Gastrocnemius medialis (tissue), 4 donors: ENCODE measurements at regions of chr12 and their contacts with region 1.

Region 1: DNA sequence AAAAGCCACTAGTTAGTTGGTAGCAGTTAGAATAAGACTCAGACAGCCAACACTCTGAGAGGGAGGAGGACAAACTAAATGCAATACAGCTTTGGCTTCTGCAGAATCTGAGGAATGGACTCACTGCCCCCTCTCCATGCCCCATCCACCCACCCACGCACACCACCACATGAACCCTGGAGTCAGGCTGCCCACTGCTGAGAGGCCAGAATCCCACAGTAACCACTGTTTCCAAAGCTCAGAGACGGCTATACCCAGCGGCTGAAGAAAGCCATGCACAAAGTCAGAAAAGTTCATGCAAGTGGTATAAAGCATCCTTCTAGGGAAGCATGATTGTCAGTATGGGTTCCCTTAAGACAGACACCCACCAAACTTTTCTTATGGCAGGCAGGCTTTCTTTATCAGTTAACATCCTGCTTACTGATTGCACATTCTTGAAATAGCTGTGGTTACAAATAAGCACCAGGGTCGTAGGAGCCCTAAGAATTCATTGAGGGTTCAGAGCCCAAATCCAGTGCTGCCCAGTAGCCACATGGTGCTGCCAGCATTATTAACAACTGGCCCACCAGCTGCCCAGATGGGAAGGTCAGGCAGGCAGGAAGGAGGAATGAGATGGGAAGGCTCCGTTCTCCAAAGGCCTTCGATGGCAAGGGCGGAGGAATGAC is 61.5 kb downstream of the NT5DC3 start:
- DNase-seq: no peak
- ATAC-seq: no peak
- H3K4me3 ChIP-seq: no peak overlapping the region
- H3K27ac ChIP-seq: peak overlapping the region in 1 of 4 donors; percentile 91
- H3K4me1 ChIP-seq: peaks cover 39 to 45% of the 10 kb centered on the region in 2 donors
- H3K27me3 ChIP-seq: no peaks in the 10 kb centered on the region
- CTCF ChIP-seq: no peak
- POLR2A ChIP-seq: no peak

Region 2: DNA sequence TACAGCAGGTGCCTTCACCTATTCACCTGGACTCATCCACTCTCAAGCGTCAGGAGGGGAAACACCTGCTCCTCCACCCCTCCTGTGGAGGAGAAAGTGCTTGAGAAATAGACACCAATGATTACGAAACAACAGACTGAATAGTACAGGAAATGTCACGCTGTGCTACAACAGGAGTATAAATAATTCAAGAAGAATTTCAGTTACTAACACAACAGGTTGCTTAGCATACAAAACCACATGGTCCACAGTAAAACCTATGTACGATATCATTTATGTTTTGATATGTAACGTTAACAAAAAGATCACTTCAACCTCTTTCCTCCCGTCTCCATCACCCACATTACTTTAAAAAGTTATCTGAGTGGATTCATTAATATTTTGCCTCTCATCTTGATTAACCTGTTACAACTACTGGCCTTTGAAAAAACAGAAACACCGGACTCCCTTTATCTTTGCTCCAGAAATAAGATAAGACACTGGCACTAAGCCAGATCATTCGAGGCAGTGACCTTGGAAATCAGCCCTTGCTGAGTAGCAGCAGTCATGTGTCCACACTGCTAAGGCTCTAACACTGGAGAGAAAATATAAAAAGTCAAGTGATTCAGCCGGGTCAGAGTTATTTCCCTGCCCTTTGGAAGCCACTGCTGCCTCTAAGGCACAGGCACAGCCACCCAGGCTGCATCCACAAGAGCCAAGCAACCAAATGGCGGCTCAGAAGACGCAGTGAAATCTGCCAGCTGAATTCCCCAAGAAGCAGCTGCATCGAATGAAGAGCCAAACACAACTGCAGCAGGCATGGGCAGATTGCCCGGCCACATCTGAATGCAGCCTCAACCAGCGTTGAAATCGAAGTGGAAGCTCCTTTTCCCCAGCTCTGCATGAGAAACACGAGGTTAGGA is 20.6 kb after region 1 on chr12:
- in situ Hi-C with region 1: no loop called
- intact Hi-C with region 1: loop called (anchors 1 kb)
- DNase-seq: peak; percentile 70 to 77
- ATAC-seq: peak; percentile 87 to 88
- H3K4me3 ChIP-seq: peak overlapping the region; percentile 2 to 35 (median 26)
- H3K27ac ChIP-seq: peak overlapping the region; percentile 81 to 94 (median 90)
- H3K4me1 ChIP-seq: peaks cover 29 to 34% of the 10 kb centered on the region in 2 donors
- H3K27me3 ChIP-seq: no peaks in the 10 kb centered on the region
- CTCF ChIP-seq: no peak
- POLR2A ChIP-seq: no peak

Region 3: GRCh38 chr12:103840876-103841689 is 61.5 kb after region 1 on chr12 and contains the start of gene NT5DC3:
- in situ Hi-C with region 1: no loop called
- intact Hi-C with region 1: loop called (anchors 2 kb)
- DNase-seq: peak; percentile 75 to 78
- ATAC-seq: peak; percentile 83 to 87
- H3K4me3 ChIP-seq: peak within 1 kb of the TSS; percentile 63 to 90 (median 79)
- H3K27ac ChIP-seq: peak within 1 kb of the TSS; percentile 80 to 90 (median 82)
- H3K4me1 ChIP-seq: peaks cover 14 to 20% of the 10 kb centered on the region in 2 donors
- H3K27me3 ChIP-seq: no peaks in the 10 kb centered on the region
- CTCF ChIP-seq: peak in 1 of 5 experiments; percentile 12
- POLR2A ChIP-seq: peak; percentile 93 to 97
- total RNA-seq, gene NT5DC3: 8.8 to 18.7 (median 13.9) TPM

Region 4: DNA sequence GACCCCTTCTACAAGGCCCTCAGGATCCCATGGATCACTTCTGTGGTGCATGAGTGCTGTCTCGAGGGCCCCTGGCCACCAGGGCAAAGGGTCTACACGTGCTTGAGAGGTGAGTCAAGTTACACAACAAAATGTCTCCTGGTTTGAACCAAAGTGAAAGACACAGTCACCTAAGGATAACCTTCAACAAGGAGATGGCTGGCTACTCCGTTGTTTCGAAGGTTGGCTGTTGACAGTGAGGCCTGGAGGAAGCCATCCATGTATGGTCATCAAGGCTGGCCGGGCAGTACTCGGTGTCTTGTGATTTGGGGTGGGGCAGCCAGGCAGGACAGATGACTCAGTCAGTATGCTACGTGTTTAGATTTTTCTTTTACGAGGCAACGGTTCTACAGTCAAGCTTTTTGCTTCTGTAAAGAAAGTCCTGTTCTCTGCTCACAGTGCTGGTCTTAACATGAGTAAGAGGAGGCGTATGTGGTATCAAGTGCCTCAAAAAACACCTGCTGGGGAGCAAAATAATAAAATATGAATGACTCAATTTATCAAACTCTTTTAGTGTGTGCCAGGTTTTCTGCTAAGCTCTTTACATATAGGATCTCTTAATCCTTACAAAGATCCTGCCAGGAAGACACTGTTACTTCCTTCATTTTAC is 79.5 kb after region 1 on chr12:
- in situ Hi-C with region 1: loop called in 2 of 4 experiments (anchors 10 kb)
- intact Hi-C with region 1: loop called (anchors 1 kb)
- DNase-seq: peak; percentile 85 to 90
- ATAC-seq: peak; percentile 97 to 98
- H3K4me3 ChIP-seq: no peak overlapping the region
- H3K27ac ChIP-seq: peak overlapping the region; percentile 78 to 93 (median 79)
- H3K4me1 ChIP-seq: peaks cover 6 to 13% of the 10 kb centered on the region in 2 donors
- H3K27me3 ChIP-seq: no peaks in the 10 kb centered on the region
- CTCF ChIP-seq: no peak
- POLR2A ChIP-seq: peak in 1 of 2 donors; percentile 35

Region 5: GRCh38 chr12:105226219-105226618 is 1446.7 kb after region 1 on chr12:
- in situ Hi-C with region 1: no loop called
- intact Hi-C with region 1: loop called (anchors 10 kb)
- DNase-seq: peak; percentile 72 to 74
- ATAC-seq: peak; percentile 93 to 96
- H3K4me3 ChIP-seq: no peak overlapping the region
- H3K27ac ChIP-seq: peak overlapping the region; percentile 42 to 75 (median 47)
- H3K4me1 ChIP-seq: peaks cover 36 to 37% of the 10 kb centered on the region in 2 donors
- H3K27me3 ChIP-seq: no peaks in the 10 kb centered on the region
- CTCF ChIP-seq: no peak
- POLR2A ChIP-seq: peak in 1 of 2 donors; percentile 23